Naive thymus-derived CD4-positive, alpha-beta T cell (primary cell): ENCODE measurements at regions of chr1 and their contacts with region 1.

Region 1: DNA sequence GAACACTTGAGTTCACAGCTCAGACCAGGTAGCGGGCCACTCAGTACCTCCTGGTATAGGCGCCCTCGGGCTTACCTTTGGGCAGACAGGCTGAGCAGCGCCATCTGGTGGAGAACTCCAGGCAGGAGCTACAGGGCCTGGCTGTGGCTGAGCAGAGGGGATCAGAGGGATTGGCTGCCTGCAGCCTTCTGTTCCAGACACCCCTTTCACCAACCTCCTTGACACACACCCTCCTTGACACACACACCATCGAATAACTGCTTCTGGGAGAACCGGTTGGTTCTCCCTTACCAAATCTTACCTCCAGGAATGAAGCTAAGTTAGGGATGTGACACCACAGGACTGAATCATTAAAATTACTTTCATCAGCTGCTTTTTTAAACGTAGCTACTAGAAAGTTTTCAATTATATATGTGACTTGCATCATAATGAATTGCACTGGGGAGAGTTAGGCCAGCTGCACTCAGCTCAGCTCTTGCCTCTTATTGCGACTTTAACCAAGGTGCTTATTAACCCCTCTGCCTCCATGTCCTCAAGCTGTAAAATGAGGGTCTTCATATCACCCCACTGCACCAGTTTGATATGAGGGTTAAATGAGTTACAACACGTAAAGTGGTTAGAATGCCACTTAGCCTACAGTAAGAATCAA is 6.6 kb downstream of the LIN28A start:
- DNase-seq: peak; percentile 57 to 81 (median 76)
- ATAC-seq: peak; percentile 99
- H3K4me3 ChIP-seq: no peak overlapping the region
- H3K4me3 Mint-ChIP-seq: no peak overlapping the region
- H3K27ac ChIP-seq: no peak overlapping the region
- H3K27ac Mint-ChIP-seq: no peak overlapping the region
- H3K4me1 ChIP-seq: no peaks in the 10 kb centered on the region
- H3K4me1 Mint-ChIP-seq: peaks cover 0 to 3% (median 0%) of the 10 kb centered on the region in 7 donors
- H3K27me3 ChIP-seq: peaks cover 0 to 3% of the 10 kb centered on the region in 2 donors
- H3K27me3 Mint-ChIP-seq: peaks cover 17 to 65% (median 19%) of the 10 kb centered on the region in 5 donors

Region 2: DNA sequence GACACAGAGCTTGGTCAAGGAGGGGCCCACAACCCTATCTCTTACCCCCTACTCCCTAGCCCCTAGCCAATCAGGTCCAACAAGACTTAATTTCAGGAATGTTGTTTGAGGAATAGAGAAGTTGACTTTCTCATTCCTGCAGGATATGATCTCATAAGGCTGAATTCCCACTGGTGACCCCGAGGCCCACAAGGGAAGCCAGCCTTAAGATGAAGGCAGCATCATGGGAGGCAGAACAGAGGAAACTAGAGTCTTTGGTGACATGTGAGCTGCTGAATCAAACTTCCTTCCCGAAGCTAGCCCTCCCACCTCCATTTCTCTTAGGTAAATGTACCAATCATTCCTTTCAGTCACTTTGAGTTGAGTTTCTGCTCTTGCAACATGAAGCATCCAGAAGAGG is 314.7 kb before region 1 on chr1:
- CTCF ChIA-PET with region 1: no interaction called
- POLR2A ChIA-PET with region 1: no interaction called
- intact Hi-C with region 1: loop called in 1 of 2 experiments (anchors 10 kb)
- DNase-seq: no peak
- ATAC-seq: no peak
- H3K4me3 ChIP-seq: no peak overlapping the region
- H3K4me3 Mint-ChIP-seq: no peak overlapping the region
- H3K27ac ChIP-seq: no peak overlapping the region
- H3K27ac Mint-ChIP-seq: no peak overlapping the region
- H3K4me1 ChIP-seq: no peaks in the 10 kb centered on the region
- H3K4me1 Mint-ChIP-seq: peaks cover 0 to 13% (median 6%) of the 10 kb centered on the region in 7 donors
- H3K27me3 ChIP-seq: no peaks in the 10 kb centered on the region
- H3K27me3 Mint-ChIP-seq: peaks cover 0 to 27% (median 0%) of the 10 kb centered on the region in 5 donors

Region 3: GRCh38 chr1:26279456-26280332 is 137.5 kb before region 1 on chr1 and contains the start of gene SH3BGRL3:
- CTCF ChIA-PET with region 1: interaction called, 19 read pairs
- POLR2A ChIA-PET with region 1: interaction called, 10 read pairs
- intact Hi-C with region 1: loop called (anchors 1 to 2 kb)
- DNase-seq: peak; percentile 73 to 89 (median 84)
- ATAC-seq: peak; percentile 77
- H3K4me3 ChIP-seq: peak within 1 kb of the TSS; percentile 58
- H3K4me3 Mint-ChIP-seq: peak within 1 kb of the TSS; percentile 80 to 98 (median 89)
- H3K27ac ChIP-seq: peak within 1 kb of the TSS; percentile 86
- H3K27ac Mint-ChIP-seq: peak within 1 kb of the TSS; percentile 83 to 99 (median 93)
- H3K4me1 ChIP-seq: peaks cover 80 to 82% of the 10 kb centered on the region in 2 donors
- H3K4me1 Mint-ChIP-seq: peaks cover 60 to 85% (median 71%) of the 10 kb centered on the region in 7 donors
- H3K27me3 ChIP-seq: no peaks in the 10 kb centered on the region
- H3K27me3 Mint-ChIP-seq: no peaks in the 10 kb centered on the region
- total RNA-seq, gene SH3BGRL3: 156 to 636 (median 224) TPM

Region 4: GRCh38 chr1:26363549-26364448 is 53.4 kb before region 1 on chr1:
- CTCF ChIA-PET with region 1: interaction called, 26 read pairs
- POLR2A ChIA-PET with region 1: no interaction called
- intact Hi-C with region 1: loop called in 1 of 2 experiments (anchors 1 kb)
- DNase-seq: peak; percentile 71 to 87 (median 82)
- ATAC-seq: peak; percentile 84
- H3K4me3 ChIP-seq: no peak overlapping the region
- H3K4me3 Mint-ChIP-seq: peak overlapping the region in 6 of 10 donors; percentile 39 to 72 (median 40)
- H3K27ac ChIP-seq: no peak overlapping the region
- H3K27ac Mint-ChIP-seq: peak overlapping the region in 4 of 9 donors; percentile 20 to 52 (median 40)
- H3K4me1 ChIP-seq: peaks cover 30 to 44% of the 10 kb centered on the region in 2 donors
- H3K4me1 Mint-ChIP-seq: peaks cover 28 to 53% (median 47%) of the 10 kb centered on the region in 7 donors
- H3K27me3 ChIP-seq: no peaks in the 10 kb centered on the region
- H3K27me3 Mint-ChIP-seq: peaks cover 7 to 37% (median 16%) of the 10 kb centered on the region in 5 donors

Region 5: DNA sequence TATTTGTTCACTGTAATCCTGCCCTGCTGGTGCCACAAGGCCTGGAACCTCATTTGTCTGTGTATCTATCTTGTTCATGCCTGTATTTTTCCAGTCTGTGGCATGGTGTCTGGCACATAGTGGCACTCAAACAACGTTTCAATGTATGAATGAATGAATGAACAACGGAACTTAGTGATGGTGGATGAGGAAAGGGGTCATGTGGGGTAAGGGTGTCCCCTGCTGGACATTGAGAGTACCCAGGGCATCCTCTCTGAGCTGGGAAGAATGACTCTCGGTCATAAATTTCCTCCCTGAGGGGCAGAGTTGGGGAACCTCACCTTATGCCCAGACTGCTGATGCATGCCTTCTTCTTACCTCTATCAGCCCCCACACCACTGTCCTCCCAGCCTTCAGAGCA is 25.8 kb before region 1 on chr1:
- CTCF ChIA-PET with region 1: interaction called, 6 read pairs
- POLR2A ChIA-PET with region 1: no interaction called
- intact Hi-C with region 1: loop called in 1 of 2 experiments (anchors 1 kb)
- DNase-seq: peak in 5 of 9 donors; percentile 17 to 46 (median 43)
- ATAC-seq: peak; percentile 86
- H3K4me3 ChIP-seq: no peak overlapping the region
- H3K4me3 Mint-ChIP-seq: peak overlapping the region in 1 of 10 donors; percentile 55
- H3K27ac ChIP-seq: no peak overlapping the region
- H3K27ac Mint-ChIP-seq: peak overlapping the region in 2 of 9 donors; percentile 1 to 64
- H3K4me1 ChIP-seq: peaks cover 6 to 18% of the 10 kb centered on the region in 2 donors
- H3K4me1 Mint-ChIP-seq: peaks cover 8 to 49% (median 18%) of the 10 kb centered on the region in 7 donors
- H3K27me3 ChIP-seq: no peaks in the 10 kb centered on the region
- H3K27me3 Mint-ChIP-seq: peaks cover 0 to 14% (median 0%) of the 10 kb centered on the region in 5 donors

Region 6: DNA sequence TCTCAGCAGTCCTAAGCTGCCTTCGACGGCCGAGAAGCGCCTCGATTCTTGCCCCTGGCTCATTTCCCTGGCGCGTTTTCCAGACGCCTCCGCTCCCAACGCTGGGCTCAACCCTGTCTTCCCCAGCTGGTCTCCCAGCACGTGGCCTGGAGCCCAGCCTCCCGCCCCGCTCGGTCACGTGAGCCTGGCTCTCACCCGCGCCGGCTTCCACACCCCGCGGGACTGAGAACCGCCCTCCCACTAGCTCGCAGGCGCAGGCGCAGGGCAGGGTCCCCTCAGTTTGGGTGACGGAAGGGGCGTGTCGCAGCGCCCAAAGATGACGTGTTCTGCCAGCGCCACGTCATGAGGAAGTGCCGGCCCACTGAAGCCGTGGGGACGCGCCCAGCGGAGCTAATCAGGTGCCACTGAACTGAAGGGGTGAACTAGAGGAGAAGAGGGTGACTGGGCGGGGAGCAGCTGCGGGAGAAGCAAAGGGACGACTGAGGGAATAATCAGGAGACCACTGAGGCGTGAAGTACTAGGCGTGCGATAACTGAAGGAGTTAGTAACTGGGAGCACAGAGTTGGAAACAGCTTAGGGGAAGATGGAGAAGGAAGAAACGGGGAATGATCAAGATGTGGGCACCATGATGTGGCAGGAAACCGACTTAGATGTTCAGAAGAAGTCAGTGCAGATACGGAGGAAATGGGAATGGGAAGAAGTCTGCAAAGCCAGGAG is 14.9 kb after region 1 on chr1 and contains the start of gene DHDDS:
- CTCF ChIA-PET with region 1: interaction called, 9 read pairs
- POLR2A ChIA-PET with region 1: interaction called, 6 read pairs
- intact Hi-C with region 1: loop called in 1 of 2 experiments (anchors 1 kb)
- DNase-seq: peak; percentile 95 to 98 (median 97)
- ATAC-seq: peak; percentile 99
- H3K4me3 ChIP-seq: peak within 1 kb of the TSS; percentile 88
- H3K4me3 Mint-ChIP-seq: peak within 1 kb of the TSS; percentile 92 to 99 (median 96)
- H3K27ac ChIP-seq: peak within 1 kb of the TSS; percentile 76
- H3K27ac Mint-ChIP-seq: peak within 1 kb of the TSS; percentile 90 to 99 (median 93)
- H3K4me1 ChIP-seq: peaks cover 11 to 15% of the 10 kb centered on the region in 2 donors
- H3K4me1 Mint-ChIP-seq: peaks cover 14 to 26% (median 22%) of the 10 kb centered on the region in 7 donors
- H3K27me3 ChIP-seq: no peaks in the 10 kb centered on the region
- H3K27me3 Mint-ChIP-seq: peaks cover 0 to 15% (median 0%) of the 10 kb centered on the region in 5 donors
- total RNA-seq, gene DHDDS: 28.1 to 58.9 (median 37.7) TPM

Region 7: DNA sequence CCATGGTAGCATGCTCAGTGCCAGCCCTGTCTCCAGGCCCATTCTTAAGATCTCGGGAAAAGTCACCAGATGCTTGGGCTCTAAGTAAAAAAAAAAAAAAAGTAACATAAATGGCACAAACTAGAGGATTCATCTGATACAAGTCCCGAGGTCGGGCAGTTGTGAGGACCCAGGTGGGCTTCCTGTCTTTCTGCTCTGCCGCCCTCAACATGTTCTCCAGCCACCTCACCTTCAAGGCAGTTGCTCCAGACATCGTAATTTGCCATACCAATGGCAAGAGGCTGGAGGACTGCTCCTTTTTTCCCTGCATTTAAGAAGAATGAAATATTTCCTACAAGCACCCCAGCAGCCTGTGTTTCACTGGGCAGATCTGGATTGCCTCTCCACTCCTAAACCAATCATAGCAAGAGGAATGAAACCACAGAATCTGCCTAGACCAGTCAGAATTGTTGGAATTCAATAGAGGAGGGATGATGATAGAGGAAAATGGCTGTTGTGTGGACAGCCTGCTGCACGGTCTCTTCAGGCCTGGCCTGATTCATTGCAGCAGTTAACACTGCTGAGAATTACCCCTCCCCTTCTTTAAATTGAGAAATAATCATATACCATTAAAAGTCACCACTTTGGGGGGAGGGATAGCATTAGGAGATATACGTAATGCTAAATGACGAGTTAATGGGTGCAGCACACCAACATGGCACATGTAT is 60.4 kb after region 1 on chr1:
- CTCF ChIA-PET with region 1: no interaction called
- POLR2A ChIA-PET with region 1: no interaction called
- intact Hi-C with region 1: no loop called
- DNase-seq: no peak
- ATAC-seq: no peak
- H3K4me3 ChIP-seq: no peak overlapping the region
- H3K4me3 Mint-ChIP-seq: no peak overlapping the region
- H3K27ac ChIP-seq: peak overlapping the region; percentile 2
- H3K27ac Mint-ChIP-seq: peak overlapping the region in 6 of 9 donors; percentile 7 to 69 (median 36)
- H3K4me1 ChIP-seq: peaks cover 16 to 21% of the 10 kb centered on the region in 2 donors
- H3K4me1 Mint-ChIP-seq: peaks cover 12 to 48% (median 38%) of the 10 kb centered on the region in 7 donors
- H3K27me3 ChIP-seq: no peaks in the 10 kb centered on the region
- H3K27me3 Mint-ChIP-seq: no peaks in the 10 kb centered on the region

Region 8: GRCh38 chr1:26761217-26761616 is 344.0 kb after region 1 on chr1:
- CTCF ChIA-PET with region 1: no interaction called
- POLR2A ChIA-PET with region 1: no interaction called
- intact Hi-C with region 1: no loop called
- DNase-seq: no peak
- ATAC-seq: no peak
- H3K4me3 ChIP-seq: no peak overlapping the region
- H3K4me3 Mint-ChIP-seq: no peak overlapping the region
- H3K27ac ChIP-seq: no peak overlapping the region
- H3K27ac Mint-ChIP-seq: peak overlapping the region in 3 of 9 donors; percentile 22 to 85 (median 52)
- H3K4me1 ChIP-seq: peaks cover 0 to 2% of the 10 kb centered on the region in 2 donors
- H3K4me1 Mint-ChIP-seq: peaks cover 7 to 42% (median 28%) of the 10 kb centered on the region in 7 donors
- H3K27me3 ChIP-seq: no peaks in the 10 kb centered on the region
- H3K27me3 Mint-ChIP-seq: no peaks in the 10 kb centered on the region